ENCODE measurements at regions of chr5 and their contacts with region 1.

Region 1: DNA sequence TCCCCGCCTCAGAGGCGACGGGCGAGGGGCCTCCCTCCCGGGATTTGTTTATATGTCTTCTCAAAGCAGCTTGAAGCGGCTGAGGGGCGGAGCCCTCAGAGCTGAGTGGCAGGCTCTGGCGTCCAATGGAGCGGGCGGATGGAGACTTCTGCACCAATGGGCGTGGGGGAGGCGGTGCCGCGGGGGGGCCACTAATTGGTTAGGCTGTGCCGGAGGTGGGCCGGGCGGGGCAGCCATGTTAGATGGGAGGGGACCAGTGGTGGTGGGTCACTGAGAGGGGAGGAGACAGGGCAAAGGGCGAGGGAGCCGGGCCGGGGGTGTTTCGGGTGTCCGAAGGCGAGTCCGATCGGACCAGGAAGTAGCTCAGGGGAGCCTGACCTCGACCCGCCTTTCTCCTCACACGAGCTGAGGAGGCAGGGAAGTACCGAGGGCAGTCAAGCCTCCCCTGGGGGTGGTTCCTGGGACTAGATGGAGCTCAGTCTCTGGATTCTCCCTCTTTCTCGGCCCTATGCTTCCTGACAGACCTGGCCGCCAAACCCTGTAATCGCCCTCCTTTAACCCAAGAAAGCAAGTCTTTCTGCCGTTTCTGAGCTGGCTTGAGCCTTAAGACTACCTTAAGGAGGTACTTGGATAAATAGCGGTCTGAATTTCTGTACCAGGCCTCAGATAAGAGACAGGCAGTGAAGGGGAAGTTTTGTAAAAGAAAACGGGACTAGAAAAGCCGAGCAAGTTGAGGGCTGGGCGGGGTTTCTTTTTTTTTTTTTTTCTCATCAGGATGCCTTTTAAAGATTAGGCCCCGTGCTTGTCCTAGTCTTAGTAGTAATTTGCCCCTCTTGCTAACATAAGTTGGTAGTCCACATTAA is 1.1 kb downstream of the CREBRF start:
- DNase-seq: peak; percentile 100
- H3K4me3 Mint-ChIP-seq: peak overlapping the region; percentile 98
- H3K27ac Mint-ChIP-seq: peak overlapping the region; percentile 87
- H3K4me1 Mint-ChIP-seq: peaks cover 23% of the 10 kb centered on the region
- H3K27me3 Mint-ChIP-seq: no peaks in the 10 kb centered on the region
- CTCF ChIP-seq: no peak

Region 2: DNA sequence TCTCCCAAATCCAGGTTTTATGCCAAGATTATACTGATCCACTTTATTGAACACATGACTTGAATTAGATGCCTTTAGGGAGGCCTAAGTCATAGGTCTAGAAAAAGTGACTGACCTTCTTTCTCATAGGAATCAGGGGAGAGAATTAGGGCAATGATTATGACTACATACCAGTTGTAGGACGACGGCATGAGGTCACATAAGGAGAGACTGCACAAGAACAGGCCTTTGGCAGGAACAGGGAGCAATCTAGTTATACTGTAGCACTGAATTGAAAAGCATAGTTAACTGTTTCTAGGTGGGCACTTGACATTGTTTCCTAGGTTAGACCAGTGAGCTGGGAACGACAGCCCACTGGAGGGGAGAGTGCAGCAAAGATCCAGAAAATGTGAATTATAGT is 21.6 kb after region 1 on chr5:
- CTCF ChIA-PET with region 1: no interaction called
- intact Hi-C with region 1: no loop called
- DNase-seq: no peak
- H3K4me3 Mint-ChIP-seq: no peak overlapping the region
- H3K27ac Mint-ChIP-seq: no peak overlapping the region
- H3K4me1 Mint-ChIP-seq: peaks cover 8% of the 10 kb centered on the region
- H3K27me3 Mint-ChIP-seq: no peaks in the 10 kb centered on the region
- CTCF ChIP-seq: no peak

Region 3: GRCh38 chr5:173094012-173094661 is 36.8 kb after region 1 on chr5:
- CTCF ChIA-PET with region 1: no interaction called
- intact Hi-C with region 1: loop called (anchors 2 kb)
- DNase-seq: no peak
- H3K4me3 Mint-ChIP-seq: peak overlapping the region; percentile 5
- H3K27ac Mint-ChIP-seq: peak overlapping the region; percentile 41
- H3K4me1 Mint-ChIP-seq: peaks cover 22% of the 10 kb centered on the region
- H3K27me3 Mint-ChIP-seq: no peaks in the 10 kb centered on the region
- CTCF ChIP-seq: no peak

Region 4: DNA sequence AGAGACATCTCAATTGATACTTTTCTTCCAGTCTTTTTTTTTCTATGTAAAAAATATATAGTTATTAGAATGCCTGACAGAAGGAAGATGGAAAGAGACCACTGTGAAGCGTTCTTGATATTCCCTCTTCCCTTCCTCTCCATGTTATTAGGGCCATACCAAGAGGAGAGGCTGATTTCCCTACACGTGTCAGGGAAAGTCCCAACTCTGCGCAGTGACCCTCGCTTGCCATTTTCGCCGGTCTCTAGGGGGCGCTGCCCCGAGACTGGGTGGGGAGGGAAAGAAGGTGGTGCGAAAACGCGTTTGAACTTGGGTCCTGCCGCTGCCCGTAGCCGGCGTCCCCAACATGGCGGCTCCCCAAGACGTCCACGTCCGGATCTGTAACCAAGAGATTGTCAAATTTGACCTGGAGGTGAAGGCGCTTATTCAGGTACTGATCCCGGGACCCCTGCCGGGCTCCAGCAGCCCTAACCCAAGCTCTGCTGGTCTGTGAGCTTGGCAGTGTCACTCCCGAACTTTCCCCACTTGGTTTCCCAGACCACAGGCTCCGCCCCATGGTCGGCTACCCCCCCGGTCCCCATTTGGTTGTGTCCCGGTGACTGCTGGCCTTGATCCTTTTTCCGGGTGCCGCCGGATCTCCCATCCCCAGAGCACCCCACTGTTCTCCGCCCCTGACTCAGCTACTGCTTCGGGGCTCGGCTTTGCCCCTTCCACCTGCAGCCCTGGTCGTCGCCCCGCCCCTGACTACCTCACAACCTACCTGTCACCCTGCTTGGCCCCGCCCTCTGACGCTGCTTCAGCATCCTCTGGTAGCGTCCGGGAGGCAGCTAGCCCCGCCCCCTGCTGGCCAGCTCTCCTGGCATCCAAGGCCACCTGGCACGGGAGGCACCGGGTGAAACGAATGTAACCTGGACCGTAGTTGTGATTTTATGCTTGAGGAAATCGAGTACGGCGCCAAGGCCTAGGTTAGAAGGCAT is 87.2 kb after region 1 on chr5 and contains the start of gene BNIP1:
- CTCF ChIA-PET with region 1: interaction called, 10 read pairs
- intact Hi-C with region 1: loop called (anchors 1 kb)
- DNase-seq: peak; percentile 100
- H3K4me3 Mint-ChIP-seq: peak within 1 kb of the TSS; percentile 100
- H3K27ac Mint-ChIP-seq: peak within 1 kb of the TSS; percentile 99
- H3K4me1 Mint-ChIP-seq: peaks cover 11% of the 10 kb centered on the region
- H3K27me3 Mint-ChIP-seq: no peaks in the 10 kb centered on the region
- CTCF ChIP-seq: peak; percentile 95
- total RNA-seq, gene BNIP1: 13.4 and 13.6 TPM in 2 replicates

Region 5: DNA sequence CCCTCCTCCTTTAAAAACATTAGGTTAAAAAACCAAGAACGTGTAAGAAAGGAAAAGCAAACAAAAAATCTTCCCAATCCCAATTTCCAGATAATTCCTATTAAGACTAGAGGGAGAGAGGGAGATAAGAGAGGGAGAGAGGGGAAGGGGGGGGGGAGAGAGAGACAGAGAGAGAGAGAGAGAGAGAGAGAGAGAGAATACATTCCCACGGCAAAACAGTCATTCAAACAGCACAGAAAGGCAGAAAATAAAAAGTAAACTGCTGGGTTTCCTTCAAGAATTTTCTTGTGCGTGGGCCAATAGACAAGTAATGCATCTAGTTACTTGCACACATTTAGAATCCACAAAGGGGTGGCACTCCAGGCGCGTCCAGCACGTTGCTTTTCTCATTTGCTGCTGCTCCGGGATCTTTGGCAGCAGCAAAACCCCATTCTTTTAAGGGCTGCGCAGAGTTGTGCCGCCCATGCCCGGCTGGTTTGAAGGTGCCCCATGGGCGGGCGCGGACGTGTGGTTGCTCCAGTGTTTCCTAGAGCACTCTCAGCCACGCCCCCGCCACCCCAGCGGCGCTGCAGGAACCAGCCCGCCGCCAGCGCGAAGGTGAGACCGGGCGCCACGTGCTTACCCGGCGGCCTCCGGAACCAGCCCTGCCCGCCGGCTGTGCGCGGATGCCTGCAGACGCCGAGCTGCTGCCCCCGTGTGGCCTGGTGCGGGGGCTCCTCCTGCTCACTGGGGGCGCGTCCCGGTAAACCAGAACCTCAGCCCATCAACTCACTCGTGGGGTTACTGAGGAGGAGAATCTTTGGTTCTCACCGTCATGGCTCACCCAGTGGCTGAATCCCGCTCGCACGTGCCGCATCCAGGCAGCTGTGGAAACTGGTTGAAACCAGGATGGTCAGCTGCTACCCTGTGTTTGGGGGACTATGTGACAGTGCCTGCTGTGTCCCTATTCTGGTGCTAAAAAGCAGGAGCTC is 226.3 kb after region 1 on chr5:
- CTCF ChIA-PET with region 1: no interaction called
- intact Hi-C with region 1: no loop called
- DNase-seq: peak; percentile 92
- H3K4me3 Mint-ChIP-seq: peak overlapping the region; percentile 24
- H3K27ac Mint-ChIP-seq: no peak overlapping the region
- H3K4me1 Mint-ChIP-seq: no peaks in the 10 kb centered on the region
- H3K27me3 Mint-ChIP-seq: peaks cover 96% of the 10 kb centered on the region
- CTCF ChIP-seq: peak; percentile 72

Region 6: DNA sequence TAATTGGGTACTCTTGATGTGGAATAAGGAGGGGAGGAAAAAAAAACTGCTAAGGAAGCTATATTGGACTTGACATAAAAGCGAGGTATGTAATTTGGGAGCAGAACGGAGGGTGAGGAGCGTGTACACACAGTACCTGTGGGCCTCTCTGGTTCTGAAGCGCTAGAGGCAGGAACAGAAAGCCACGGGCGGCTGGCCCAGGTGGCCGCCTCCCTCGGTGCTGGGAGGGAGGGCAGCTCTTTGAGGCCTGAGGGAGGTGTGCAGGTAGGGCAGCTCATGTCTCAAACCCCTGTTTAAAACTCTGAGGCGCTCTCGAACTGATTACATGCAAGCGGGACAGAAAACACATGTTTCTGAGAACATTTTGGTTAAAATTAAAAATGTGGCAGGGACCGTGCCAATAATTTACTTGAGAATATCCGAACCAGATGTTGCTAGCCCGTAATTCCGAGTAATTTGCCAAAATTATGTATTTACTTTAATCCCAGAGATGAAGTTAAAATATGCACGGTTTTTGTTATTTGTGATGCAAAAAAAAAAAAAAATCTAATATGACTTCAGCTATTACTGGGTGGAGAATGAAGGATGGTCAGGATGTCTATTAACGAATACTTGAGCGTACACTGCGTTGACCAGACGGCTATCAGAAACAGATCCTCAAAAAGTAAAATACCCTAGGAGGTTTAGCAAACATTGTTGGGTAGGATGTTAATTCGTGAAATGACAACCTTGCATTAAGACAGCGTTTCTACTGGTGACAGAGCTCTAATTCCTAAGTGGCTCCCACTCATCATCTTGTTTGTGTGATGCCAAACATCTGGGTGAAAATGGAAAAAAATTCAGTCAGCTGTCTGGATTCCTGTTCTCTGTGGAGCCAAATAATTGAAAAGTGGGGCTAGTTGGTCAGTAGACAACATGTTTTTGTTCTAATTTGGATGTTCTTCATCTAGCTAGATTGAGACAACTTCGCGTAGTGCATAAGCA is 295.4 kb after region 1 on chr5:
- CTCF ChIA-PET with region 1: no interaction called
- intact Hi-C with region 1: no loop called
- DNase-seq: no peak
- H3K4me3 Mint-ChIP-seq: no peak overlapping the region
- H3K27ac Mint-ChIP-seq: no peak overlapping the region
- H3K4me1 Mint-ChIP-seq: no peaks in the 10 kb centered on the region
- H3K27me3 Mint-ChIP-seq: peaks cover 44% of the 10 kb centered on the region
- CTCF ChIP-seq: no peak

Measured in Calu3 (cell line).